ENCODE measurements at regions of chr11 and their contacts with region 1.

Region 1: GRCh38 chr11:9757809-9758636 is 94.1 kb downstream of the SWAP70 start:
- DNase-seq: peak; percentile 93
- ATAC-seq: peak; percentile 82
- H3K4me3 Mint-ChIP-seq: peak overlapping the region; percentile 74
- H3K27ac Mint-ChIP-seq: peak overlapping the region; percentile 76
- H3K4me1 Mint-ChIP-seq: peaks cover 45% of the 10 kb centered on the region
- H3K27me3 Mint-ChIP-seq: no peaks in the 10 kb centered on the region

Region 2: DNA sequence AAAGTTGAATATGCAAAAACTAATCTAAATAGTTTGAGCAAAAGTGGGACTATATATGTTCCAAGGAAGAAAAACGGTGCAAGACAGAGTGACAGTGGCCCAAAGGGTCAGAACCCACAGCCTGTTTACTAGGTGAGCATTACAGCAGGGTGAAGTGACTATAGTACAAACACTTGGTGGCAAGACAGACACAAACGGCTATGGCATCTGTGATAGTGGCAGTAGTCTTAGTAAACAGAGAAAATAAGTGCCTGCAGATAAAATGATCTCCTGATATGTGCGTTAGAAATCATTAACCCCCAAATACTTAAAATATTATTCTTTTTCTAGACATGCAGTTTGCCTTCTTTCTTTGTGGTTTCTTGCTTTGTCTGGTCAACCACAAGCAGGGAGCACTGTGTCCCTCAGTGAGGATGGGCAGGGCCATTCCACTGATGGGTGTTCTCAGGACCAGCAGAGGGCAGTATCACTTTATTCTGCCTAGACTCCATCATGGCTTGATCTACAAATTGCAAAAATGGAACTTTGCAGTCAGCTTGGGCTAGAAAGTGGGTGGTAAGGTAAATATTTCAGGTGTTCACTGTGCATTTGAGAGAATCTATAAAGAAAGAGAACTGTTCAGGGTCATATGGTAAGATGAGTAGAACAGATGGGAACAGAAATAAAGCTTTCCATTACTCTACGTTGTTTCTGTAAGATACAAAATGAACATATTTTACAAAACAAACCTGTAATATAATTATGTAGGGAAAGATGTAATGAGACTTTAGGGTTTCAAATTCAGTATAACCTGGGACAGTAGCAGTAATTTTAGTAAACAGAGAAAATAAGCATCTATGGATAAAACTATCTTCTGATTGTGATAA is 104.1 kb after region 1 on chr11:
- CTCF ChIA-PET with region 1: interaction called, 32 read pairs
- DNase-seq: peak; percentile 71
- ATAC-seq: peak; percentile 85
- H3K4me3 Mint-ChIP-seq: no peak overlapping the region
- H3K27ac Mint-ChIP-seq: no peak overlapping the region
- H3K4me1 Mint-ChIP-seq: peaks cover 33% of the 10 kb centered on the region
- H3K27me3 Mint-ChIP-seq: no peaks in the 10 kb centered on the region

Region 3: GRCh38 chr11:9972989-9973388 is 215.0 kb after region 1 on chr11:
- CTCF ChIA-PET with region 1: interaction called, 44 read pairs
- DNase-seq: peak; percentile 44
- ATAC-seq: peak; percentile 68
- H3K4me3 Mint-ChIP-seq: no peak overlapping the region
- H3K27ac Mint-ChIP-seq: no peak overlapping the region
- H3K4me1 Mint-ChIP-seq: peaks cover 3% of the 10 kb centered on the region
- H3K27me3 Mint-ChIP-seq: no peaks in the 10 kb centered on the region

Region 4: DNA sequence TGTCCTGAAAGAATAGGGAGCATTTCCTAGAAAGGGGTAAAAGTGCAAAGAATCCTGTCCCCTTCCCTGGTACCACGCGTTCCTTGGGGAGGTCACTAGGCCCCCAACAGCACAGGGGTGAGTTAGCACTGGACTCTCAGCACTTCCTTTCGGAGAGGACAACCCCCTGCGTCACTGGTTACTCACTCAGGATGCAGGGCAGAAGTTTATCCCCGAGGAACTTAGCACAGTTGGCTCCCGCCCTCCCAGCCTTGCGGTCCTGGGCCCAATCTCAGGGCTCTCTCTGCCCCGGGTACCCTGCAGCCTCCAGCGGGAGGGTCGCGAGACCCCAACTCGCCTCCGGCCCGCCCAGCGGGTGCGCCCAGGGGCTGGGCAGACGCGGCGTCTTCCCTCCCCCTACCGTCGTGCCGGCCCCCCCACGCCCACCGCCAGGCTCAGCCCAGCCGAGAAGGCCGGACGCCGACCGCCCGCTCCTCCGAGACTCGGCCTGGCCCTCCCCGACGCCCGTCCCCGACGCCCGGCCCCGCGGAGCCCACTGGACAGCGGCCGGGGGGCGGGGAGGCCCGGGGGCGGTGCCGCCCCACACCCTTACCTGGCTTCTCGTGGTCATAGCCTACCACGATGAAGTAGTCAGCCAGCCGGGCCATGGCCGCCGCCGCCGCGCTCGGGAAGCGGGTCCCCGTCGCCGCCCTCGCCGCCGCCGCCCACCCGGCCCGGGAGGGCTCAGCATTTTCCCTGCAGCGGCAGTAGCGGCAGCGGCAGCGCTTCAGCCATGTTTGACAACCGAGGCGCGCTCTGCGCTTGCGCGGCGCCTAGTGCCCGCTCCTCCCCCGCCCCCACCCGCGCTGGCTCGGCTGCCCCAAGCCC is 535.6 kb after region 1 on chr11 and contains the start of gene SBF2:
- CTCF ChIA-PET with region 1: interaction called, 14 read pairs
- DNase-seq: peak; percentile 83
- ATAC-seq: peak; percentile 68
- H3K4me3 Mint-ChIP-seq: peak within 1 kb of the TSS; percentile 70
- H3K27ac Mint-ChIP-seq: no peak within 1 kb of the TSS
- H3K4me1 Mint-ChIP-seq: peaks cover 34% of the 10 kb centered on the region
- H3K27me3 Mint-ChIP-seq: peaks cover 52% of the 10 kb centered on the region
- total RNA-seq, gene SBF2: 4.6 to 8.3 TPM

Region 5: GRCh38 chr11:10322830-10323792 is 565.1 kb after region 1 on chr11:
- CTCF ChIA-PET with region 1: interaction called, 15 read pairs
- DNase-seq: peak; percentile 63
- ATAC-seq: peak; percentile 90
- H3K4me3 Mint-ChIP-seq: no peak overlapping the region
- H3K27ac Mint-ChIP-seq: peak overlapping the region; percentile 48
- H3K4me1 Mint-ChIP-seq: peaks cover 4% of the 10 kb centered on the region
- H3K27me3 Mint-ChIP-seq: peaks cover 30% of the 10 kb centered on the region

Measured in activated CD8-positive, alpha-beta memory T cell treated with anti-CD3 and anti-CD28 coated beads, Interleukin-2, amount 10 ng/mL, durations not matched to agents 7 days and 5 days (primary cell).